HepG2 (cell line): ENCODE measurements at regions of chr1 and their contacts with region 1.

Region 1: GRCh38 chr1:74771913-74772515 is 39.1 kb downstream of the TYW3 start:
- DNase-seq: peak; percentile 51
- ATAC-seq: peak; percentile 76
- H3K4me3 ChIP-seq: no peak overlapping the region
- H3K27ac ChIP-seq: no peak overlapping the region
- H3K4me1 ChIP-seq: no peaks in the 10 kb centered on the region
- H3K27me3 ChIP-seq: no peaks in the 10 kb centered on the region
- CTCF ChIP-seq: peak; percentile 76
- EP300 ChIP-seq: no peak
- POLR2A ChIP-seq: no peak
- RAD21 ChIP-seq: no peak

Region 2: GRCh38 chr1:75208862-75209261 is 436.8 kb after region 1 on chr1:
- CTCF ChIA-PET with region 1: interaction called, 57 read pairs
- POLR2A ChIA-PET with region 1: no interaction called
- in situ Hi-C with region 1: loop called (anchors 5 kb)
- intact Hi-C with region 1: no loop called
- DNase-seq: no peak
- ATAC-seq: no peak
- H3K4me3 ChIP-seq: no peak overlapping the region
- H3K27ac ChIP-seq: no peak overlapping the region
- H3K4me1 ChIP-seq: no peaks in the 10 kb centered on the region
- H3K27me3 ChIP-seq: no peaks in the 10 kb centered on the region
- CTCF ChIP-seq: no peak
- EP300 ChIP-seq: no peak
- POLR2A ChIP-seq: no peak
- RAD21 ChIP-seq: no peak